KBM-7 (cell line): ENCODE measurements at regions of chr2 and their contacts with region 1.

Region 1: GRCh38 chr2:106296182-106296815 is 102.2 kb upstream of the UXS1 start:
- DNase-seq: no peak

Region 2: DNA sequence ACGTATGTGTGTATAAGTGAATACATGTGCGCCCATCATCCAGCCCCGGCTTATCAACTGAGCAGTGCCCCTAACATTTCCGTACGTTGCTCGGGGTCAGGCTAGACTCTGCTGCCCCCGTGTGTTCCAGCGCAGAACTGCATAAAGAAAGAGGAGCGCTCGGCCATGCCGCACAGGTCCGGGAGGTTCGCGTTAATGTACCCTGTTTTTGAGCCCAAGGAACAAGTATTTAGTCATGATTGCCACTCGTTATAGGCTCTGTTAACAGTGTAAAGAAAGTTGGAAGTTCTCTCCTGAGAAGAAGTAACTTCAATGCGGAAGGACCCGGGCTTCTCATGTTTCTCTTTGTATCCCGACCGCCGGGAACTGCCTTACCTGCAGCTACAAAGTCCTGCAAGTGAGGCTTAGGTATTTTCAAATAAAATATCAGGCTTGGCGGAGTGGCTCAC is 246.5 kb after region 1 on chr2:
- in situ Hi-C with region 1: loop called (anchors 25 kb)
- DNase-seq: peak; percentile 90

Region 3: DNA sequence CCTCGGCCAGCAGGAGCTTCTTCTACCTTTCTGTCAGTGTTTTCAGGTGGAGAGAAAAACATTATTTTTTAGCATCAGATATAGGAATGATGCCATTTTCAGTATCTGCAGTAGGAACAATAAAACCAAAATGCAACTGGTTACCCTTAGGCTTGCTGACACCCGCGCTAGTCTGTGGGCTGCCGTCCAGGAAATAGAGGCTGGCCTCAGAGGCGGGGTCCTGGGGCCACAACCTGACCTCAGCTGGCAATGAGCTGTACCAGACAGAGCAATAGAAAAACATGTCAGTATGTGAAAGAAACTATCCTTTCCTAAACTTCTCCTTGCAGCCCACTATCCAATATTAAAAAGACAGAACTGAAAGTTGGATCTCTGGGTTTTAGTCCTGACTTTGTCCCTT is 594.3 kb after region 1 on chr2:
- in situ Hi-C with region 1: no loop called
- DNase-seq: no peak